ENCODE measurements at regions of chr11 and their contacts with region 1.

Region 1: DNA sequence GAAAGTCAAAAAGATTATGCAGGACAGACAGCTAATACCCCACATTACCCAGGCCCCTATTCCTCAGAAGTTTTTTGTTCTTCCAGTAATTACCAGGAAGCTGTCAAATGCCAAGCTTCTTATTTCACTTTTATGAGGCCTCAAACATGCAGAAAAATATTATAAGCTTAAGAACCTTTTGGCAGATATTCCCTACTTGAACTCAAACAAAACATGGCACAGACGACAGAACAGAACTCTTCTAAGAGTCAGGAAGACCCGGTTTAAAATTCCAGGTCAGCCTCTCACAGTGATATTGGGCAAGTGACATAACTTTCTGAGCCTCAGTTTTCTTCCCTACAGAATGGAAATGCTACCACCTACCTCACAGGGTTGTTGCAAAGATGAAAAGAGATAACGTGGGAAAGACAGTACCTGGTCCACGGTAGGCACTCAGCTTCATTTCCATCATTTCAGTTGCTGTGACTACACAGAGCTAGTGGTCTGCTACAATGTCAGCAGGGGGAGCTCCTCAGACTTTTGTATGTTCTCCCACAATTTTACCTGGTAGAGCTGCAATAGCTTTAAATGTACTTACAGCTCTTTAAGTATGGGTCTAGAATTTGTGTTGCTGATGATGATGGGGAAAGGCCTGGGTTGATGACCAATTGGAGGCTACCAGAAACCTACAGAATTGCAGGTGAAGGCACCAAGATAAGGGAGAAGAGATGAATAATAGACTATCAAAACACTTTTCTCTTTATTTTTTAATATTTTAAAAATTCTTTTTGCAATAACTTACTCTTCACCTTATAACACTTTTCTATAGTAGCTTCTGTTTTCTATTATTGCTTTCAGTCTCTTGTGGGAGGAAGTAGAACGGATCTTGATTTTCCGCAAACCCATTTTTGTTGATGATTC is 98.3 kb upstream of the CHRM4 start:
- DNase-seq: peak in 4 of 5 donors; percentile 26 to 41 (median 32)
- H3K4me3 ChIP-seq: no peak overlapping the region
- H3K4me3 Mint-ChIP-seq: no peak overlapping the region
- H3K27ac ChIP-seq: no peak overlapping the region
- H3K27ac Mint-ChIP-seq: peak overlapping the region in 1 of 7 donors; percentile 43
- H3K4me1 ChIP-seq: no peaks in the 10 kb centered on the region
- H3K4me1 Mint-ChIP-seq: peaks cover 4 to 12% (median 7%) of the 10 kb centered on the region in 4 donors
- H3K27me3 ChIP-seq: no peaks in the 10 kb centered on the region
- H3K27me3 Mint-ChIP-seq: no peaks in the 10 kb centered on the region

Region 2: GRCh38 chr11:46469926-46470325 is 20.0 kb before region 1 on chr11:
- CTCF ChIA-PET with region 1: interaction called, 10 read pairs
- POLR2A ChIA-PET with region 1: no interaction called
- intact Hi-C with region 1: no loop called
- DNase-seq: no peak
- H3K4me3 ChIP-seq: no peak overlapping the region
- H3K4me3 Mint-ChIP-seq: no peak overlapping the region
- H3K27ac ChIP-seq: no peak overlapping the region
- H3K27ac Mint-ChIP-seq: no peak overlapping the region
- H3K4me1 ChIP-seq: peaks cover 4% of the 10 kb centered on the region
- H3K4me1 Mint-ChIP-seq: peaks cover 10 to 33% (median 26%) of the 10 kb centered on the region in 4 donors
- H3K27me3 ChIP-seq: no peaks in the 10 kb centered on the region
- H3K27me3 Mint-ChIP-seq: no peaks in the 10 kb centered on the region

Region 3: GRCh38 chr11:46475926-46476545 is 13.9 kb before region 1 on chr11:
- CTCF ChIA-PET with region 1: interaction called, 35 read pairs
- POLR2A ChIA-PET with region 1: no interaction called
- intact Hi-C with region 1: no loop called
- DNase-seq: no peak
- H3K4me3 ChIP-seq: no peak overlapping the region
- H3K4me3 Mint-ChIP-seq: no peak overlapping the region
- H3K27ac ChIP-seq: no peak overlapping the region
- H3K27ac Mint-ChIP-seq: peak overlapping the region in 3 of 7 donors; percentile 12 to 80 (median 53)
- H3K4me1 ChIP-seq: peaks cover 6% of the 10 kb centered on the region
- H3K4me1 Mint-ChIP-seq: peaks cover 26 to 57% (median 39%) of the 10 kb centered on the region in 4 donors
- H3K27me3 ChIP-seq: no peaks in the 10 kb centered on the region
- H3K27me3 Mint-ChIP-seq: no peaks in the 10 kb centered on the region

Region 4: DNA sequence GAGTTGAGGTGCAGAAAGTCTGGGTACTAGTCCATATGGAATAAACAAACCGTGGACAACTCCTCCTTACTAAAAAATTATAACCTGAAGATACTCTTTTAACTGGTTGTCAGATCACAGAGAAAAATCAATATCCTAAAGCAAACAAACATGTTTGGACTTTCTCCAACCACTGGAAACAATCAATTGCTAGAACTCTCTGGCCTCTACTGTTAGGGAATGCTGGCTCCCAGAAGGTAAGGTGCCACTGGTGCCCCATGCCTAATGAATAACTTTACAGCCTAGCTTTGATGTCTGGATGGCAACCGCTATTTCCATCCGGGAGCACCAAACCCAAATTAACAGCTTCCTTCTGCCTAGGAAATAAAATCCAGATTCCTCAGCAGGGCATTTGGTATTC is 29.4 kb after region 1 on chr11:
- CTCF ChIA-PET with region 1: interaction called, 10 read pairs
- POLR2A ChIA-PET with region 1: no interaction called
- intact Hi-C with region 1: no loop called
- DNase-seq: no peak
- H3K4me3 ChIP-seq: no peak overlapping the region
- H3K4me3 Mint-ChIP-seq: no peak overlapping the region
- H3K27ac ChIP-seq: no peak overlapping the region
- H3K27ac Mint-ChIP-seq: no peak overlapping the region
- H3K4me1 ChIP-seq: peaks cover 3% of the 10 kb centered on the region
- H3K4me1 Mint-ChIP-seq: peaks cover 10 to 38% (median 25%) of the 10 kb centered on the region in 4 donors
- H3K27me3 ChIP-seq: no peaks in the 10 kb centered on the region
- H3K27me3 Mint-ChIP-seq: no peaks in the 10 kb centered on the region

Region 5: GRCh38 chr11:46529095-46529905 is 39.4 kb after region 1 on chr11:
- CTCF ChIA-PET with region 1: interaction called, 13 read pairs
- POLR2A ChIA-PET with region 1: no interaction called
- intact Hi-C with region 1: no loop called
- DNase-seq: peak; percentile 64 to 78 (median 67)
- H3K4me3 ChIP-seq: no peak overlapping the region
- H3K4me3 Mint-ChIP-seq: no peak overlapping the region
- H3K27ac ChIP-seq: no peak overlapping the region
- H3K27ac Mint-ChIP-seq: peak overlapping the region in 4 of 7 donors; percentile 10 to 86 (median 53)
- H3K4me1 ChIP-seq: peaks cover 12% of the 10 kb centered on the region
- H3K4me1 Mint-ChIP-seq: peaks cover 28 to 50% (median 38%) of the 10 kb centered on the region in 4 donors
- H3K27me3 ChIP-seq: no peaks in the 10 kb centered on the region
- H3K27me3 Mint-ChIP-seq: no peaks in the 10 kb centered on the region

Region 6: GRCh38 chr11:46537537-46538295 is 47.8 kb after region 1 on chr11:
- CTCF ChIA-PET with region 1: interaction called, 11 read pairs
- POLR2A ChIA-PET with region 1: no interaction called
- intact Hi-C with region 1: loop called (anchors 2 kb)
- DNase-seq: peak; percentile 60 to 67 (median 64)
- H3K4me3 ChIP-seq: no peak overlapping the region
- H3K4me3 Mint-ChIP-seq: peak overlapping the region in 2 of 8 donors; percentile 23 to 31
- H3K27ac ChIP-seq: no peak overlapping the region
- H3K27ac Mint-ChIP-seq: peak overlapping the region in 5 of 7 donors; percentile 23 to 61 (median 29)
- H3K4me1 ChIP-seq: peaks cover 6% of the 10 kb centered on the region
- H3K4me1 Mint-ChIP-seq: peaks cover 33 to 47% (median 39%) of the 10 kb centered on the region in 4 donors
- H3K27me3 ChIP-seq: no peaks in the 10 kb centered on the region
- H3K27me3 Mint-ChIP-seq: no peaks in the 10 kb centered on the region

Measured in CD4-positive, alpha-beta memory T cell (primary cell).